ENCODE measurements at regions of chr17 and their contacts with region 1.

Region 1: GRCh38 chr17:81601525-81602120 is 35.3 kb downstream of the NPLOC4 start:
- DNase-seq: peak in 4 of 5 donors; percentile 56 to 66 (median 61)
- H3K4me3 ChIP-seq: no peak overlapping the region
- H3K4me3 Mint-ChIP-seq: no peak overlapping the region
- H3K27ac ChIP-seq: no peak overlapping the region
- H3K27ac Mint-ChIP-seq: peak overlapping the region in 4 of 7 donors; percentile 1 to 79 (median 55)
- H3K4me1 ChIP-seq: no peaks in the 10 kb centered on the region
- H3K4me1 Mint-ChIP-seq: peaks cover 3 to 14% (median 7%) of the 10 kb centered on the region in 4 donors
- H3K27me3 ChIP-seq: no peaks in the 10 kb centered on the region
- H3K27me3 Mint-ChIP-seq: no peaks in the 10 kb centered on the region

Region 2: DNA sequence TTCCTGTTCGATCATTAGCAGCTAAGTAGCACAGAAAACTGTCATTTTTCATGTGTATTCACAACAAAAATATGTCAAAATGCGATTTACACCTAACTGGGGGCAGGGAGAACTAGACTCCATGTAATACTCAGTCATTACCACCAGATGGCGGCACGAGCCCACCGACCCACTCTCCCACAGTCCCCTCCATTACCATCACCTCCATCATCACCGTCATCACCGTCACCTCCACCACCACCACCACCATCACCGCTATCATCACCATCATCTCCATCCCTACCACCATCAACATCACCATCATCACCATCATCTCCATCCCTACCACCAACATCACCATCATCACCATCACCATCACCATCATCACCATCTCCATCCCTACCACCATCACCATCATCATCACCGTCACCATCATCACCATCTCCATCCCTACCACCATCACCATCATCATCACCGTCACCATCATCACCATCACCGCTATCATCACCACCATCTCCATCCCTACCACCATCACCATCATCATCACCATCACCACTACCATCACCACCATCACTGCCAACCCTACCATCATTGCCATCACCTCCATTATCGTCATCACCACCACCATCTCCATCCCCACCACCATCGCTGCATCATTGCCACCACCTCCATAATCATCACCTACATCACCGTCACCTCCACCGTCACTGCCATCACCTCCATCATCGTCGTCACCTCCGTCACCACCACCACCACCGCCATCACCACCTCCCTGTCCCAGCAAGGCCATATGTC is 348.1 kb before region 1 on chr17:
- CTCF ChIA-PET with region 1: interaction called, 12 read pairs
- POLR2A ChIA-PET with region 1: interaction called, 3 read pairs
- intact Hi-C with region 1: loop called (anchors 1 kb)
- DNase-seq: peak; percentile 55 to 64 (median 62)
- H3K4me3 ChIP-seq: no peak overlapping the region
- H3K4me3 Mint-ChIP-seq: peak overlapping the region in 1 of 8 donors; percentile 29
- H3K27ac ChIP-seq: no peak overlapping the region
- H3K27ac Mint-ChIP-seq: peak overlapping the region; percentile 12 to 85 (median 28)
- H3K4me1 ChIP-seq: no peaks in the 10 kb centered on the region
- H3K4me1 Mint-ChIP-seq: peaks cover 7 to 11% (median 8%) of the 10 kb centered on the region in 4 donors
- H3K27me3 ChIP-seq: no peaks in the 10 kb centered on the region
- H3K27me3 Mint-ChIP-seq: no peaks in the 10 kb centered on the region

Region 3: GRCh38 chr17:81302861-81303333 is 298.7 kb before region 1 on chr17:
- CTCF ChIA-PET with region 1: no interaction called
- POLR2A ChIA-PET with region 1: no interaction called
- intact Hi-C with region 1: no loop called
- DNase-seq: no peak
- H3K4me3 ChIP-seq: no peak overlapping the region
- H3K4me3 Mint-ChIP-seq: no peak overlapping the region
- H3K27ac ChIP-seq: no peak overlapping the region
- H3K27ac Mint-ChIP-seq: peak overlapping the region in 1 of 7 donors; percentile 24
- H3K4me1 ChIP-seq: no peaks in the 10 kb centered on the region
- H3K4me1 Mint-ChIP-seq: peaks cover 0 to 5% (median 0%) of the 10 kb centered on the region in 4 donors
- H3K27me3 ChIP-seq: no peaks in the 10 kb centered on the region
- H3K27me3 Mint-ChIP-seq: no peaks in the 10 kb centered on the region

Region 4: DNA sequence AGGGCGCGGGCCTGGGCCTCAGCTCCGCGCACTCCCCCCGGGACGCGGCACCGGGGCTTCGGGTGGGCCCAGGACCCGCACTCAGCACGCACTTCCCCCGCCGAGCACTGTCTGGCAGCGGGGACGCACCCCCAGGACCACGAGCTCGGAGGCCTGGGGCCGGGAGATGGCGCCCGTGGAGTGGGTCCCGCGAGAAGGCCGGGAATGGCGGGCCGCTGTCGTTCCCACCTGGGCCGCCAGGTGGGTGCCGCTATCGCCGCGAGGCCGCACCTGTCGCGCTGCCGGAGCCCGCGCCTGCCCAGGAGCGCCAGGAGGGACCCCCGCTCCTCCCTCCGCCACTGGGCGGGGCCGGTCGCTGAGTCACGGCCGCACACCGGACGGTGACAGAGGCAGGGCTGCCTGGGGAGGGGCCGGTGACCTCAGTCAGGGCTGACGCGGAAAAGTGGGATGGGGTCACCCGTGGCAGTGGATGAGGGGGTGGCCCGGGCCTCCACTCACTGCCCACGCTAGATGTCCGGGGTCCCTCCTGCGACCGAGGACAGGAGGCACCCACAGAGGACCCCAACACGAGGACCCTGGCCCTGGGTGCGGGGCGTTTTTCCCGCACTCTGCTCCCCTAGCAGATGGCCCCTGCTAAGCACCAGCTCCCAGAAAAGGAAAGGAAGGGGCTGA is 82.2 kb before region 1 on chr17:
- CTCF ChIA-PET with region 1: interaction called, 42 read pairs
- POLR2A ChIA-PET with region 1: interaction called, 10 read pairs
- intact Hi-C with region 1: no loop called
- DNase-seq: peak; percentile 71 to 81 (median 72)
- H3K4me3 ChIP-seq: peak overlapping the region in 1 of 2 donors; percentile 55
- H3K4me3 Mint-ChIP-seq: peak overlapping the region in 4 of 8 donors; percentile 41 to 72 (median 50)
- H3K27ac ChIP-seq: peak overlapping the region; percentile 43
- H3K27ac Mint-ChIP-seq: no peak overlapping the region
- H3K4me1 ChIP-seq: peaks cover 37% of the 10 kb centered on the region
- H3K4me1 Mint-ChIP-seq: peaks cover 8 to 26% (median 19%) of the 10 kb centered on the region in 4 donors
- H3K27me3 ChIP-seq: no peaks in the 10 kb centered on the region
- H3K27me3 Mint-ChIP-seq: no peaks in the 10 kb centered on the region

Region 5: GRCh38 chr17:81586096-81586495 is 15.5 kb before region 1 on chr17:
- CTCF ChIA-PET with region 1: interaction called, 10 read pairs
- POLR2A ChIA-PET with region 1: no interaction called
- intact Hi-C with region 1: no loop called
- DNase-seq: no peak
- H3K4me3 ChIP-seq: no peak overlapping the region
- H3K4me3 Mint-ChIP-seq: no peak overlapping the region
- H3K27ac ChIP-seq: no peak overlapping the region
- H3K27ac Mint-ChIP-seq: no peak overlapping the region
- H3K4me1 ChIP-seq: no peaks in the 10 kb centered on the region
- H3K4me1 Mint-ChIP-seq: peaks cover 0 to 5% (median 0%) of the 10 kb centered on the region in 4 donors
- H3K27me3 ChIP-seq: no peaks in the 10 kb centered on the region
- H3K27me3 Mint-ChIP-seq: no peaks in the 10 kb centered on the region

Region 6: GRCh38 chr17:81621494-81622130 is 20.0 kb after region 1 on chr17:
- CTCF ChIA-PET with region 1: interaction called, 12 read pairs
- POLR2A ChIA-PET with region 1: no interaction called
- intact Hi-C with region 1: no loop called
- DNase-seq: no peak
- H3K4me3 ChIP-seq: no peak overlapping the region
- H3K4me3 Mint-ChIP-seq: no peak overlapping the region
- H3K27ac ChIP-seq: no peak overlapping the region
- H3K27ac Mint-ChIP-seq: no peak overlapping the region
- H3K4me1 ChIP-seq: no peaks in the 10 kb centered on the region
- H3K4me1 Mint-ChIP-seq: peaks cover 0 to 22% (median 12%) of the 10 kb centered on the region in 4 donors
- H3K27me3 ChIP-seq: no peaks in the 10 kb centered on the region
- H3K27me3 Mint-ChIP-seq: no peaks in the 10 kb centered on the region

Measured in CD4-positive, alpha-beta memory T cell (primary cell).